Activated CD8-positive, alpha-beta T cell treated with anti-CD3 and anti-CD28 coated beads for 36 hours (primary cell): ENCODE measurements at regions of chr10 and their contacts with region 1.

Region 1: DNA sequence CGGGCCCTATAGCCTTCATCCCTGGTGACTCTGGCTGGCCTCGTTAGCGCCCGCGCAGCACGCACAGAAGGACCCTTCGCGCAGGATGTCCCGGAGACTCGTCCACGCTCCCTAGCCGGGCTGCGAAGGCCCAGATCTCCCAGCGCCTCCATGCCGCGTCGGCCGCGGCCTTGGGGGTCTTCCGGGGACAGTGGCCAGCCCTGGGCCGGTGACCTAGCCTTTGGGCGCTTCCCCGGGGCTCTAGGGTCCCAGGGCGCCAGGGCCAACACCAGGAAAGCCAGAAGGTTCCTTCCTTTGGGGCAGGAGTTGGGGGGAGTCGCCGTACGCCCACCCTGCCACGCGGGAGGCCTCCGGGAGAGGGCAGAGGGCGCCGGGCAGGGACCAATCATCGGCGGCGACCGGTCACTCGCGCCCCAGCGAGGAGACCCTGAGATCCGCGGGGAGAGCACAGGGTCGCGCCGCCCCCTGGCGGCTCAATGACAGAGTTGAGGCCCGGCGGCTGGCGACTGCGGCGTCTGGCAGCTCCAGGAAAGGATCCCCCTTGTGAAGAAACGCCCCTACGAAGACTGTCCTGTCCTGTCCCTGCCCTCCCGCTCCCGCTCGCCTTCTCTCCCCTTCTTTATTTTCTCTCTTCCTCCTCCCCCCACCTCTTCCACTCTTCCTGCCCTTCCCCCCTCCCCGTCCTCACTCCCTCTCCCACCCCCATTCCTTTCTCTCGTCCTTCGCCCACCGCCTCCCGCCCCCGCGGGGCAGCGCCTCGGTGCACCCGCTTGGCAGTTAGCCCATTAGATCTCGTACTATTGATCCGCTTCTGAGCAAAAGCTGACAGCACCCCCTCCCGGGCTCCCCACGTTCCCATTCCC is 62.3 kb upstream of the LBX1 start:
- DNase-seq: peak; percentile 75
- ATAC-seq: peak; percentile 84
- H3K4me3 Mint-ChIP-seq: peak overlapping the region; percentile 70
- H3K27ac Mint-ChIP-seq: no peak overlapping the region
- H3K4me1 Mint-ChIP-seq: peaks cover 8% of the 10 kb centered on the region
- H3K27me3 Mint-ChIP-seq: peaks cover 65% of the 10 kb centered on the region
- CTCF ChIP-seq: peak; percentile 88

Region 2: DNA sequence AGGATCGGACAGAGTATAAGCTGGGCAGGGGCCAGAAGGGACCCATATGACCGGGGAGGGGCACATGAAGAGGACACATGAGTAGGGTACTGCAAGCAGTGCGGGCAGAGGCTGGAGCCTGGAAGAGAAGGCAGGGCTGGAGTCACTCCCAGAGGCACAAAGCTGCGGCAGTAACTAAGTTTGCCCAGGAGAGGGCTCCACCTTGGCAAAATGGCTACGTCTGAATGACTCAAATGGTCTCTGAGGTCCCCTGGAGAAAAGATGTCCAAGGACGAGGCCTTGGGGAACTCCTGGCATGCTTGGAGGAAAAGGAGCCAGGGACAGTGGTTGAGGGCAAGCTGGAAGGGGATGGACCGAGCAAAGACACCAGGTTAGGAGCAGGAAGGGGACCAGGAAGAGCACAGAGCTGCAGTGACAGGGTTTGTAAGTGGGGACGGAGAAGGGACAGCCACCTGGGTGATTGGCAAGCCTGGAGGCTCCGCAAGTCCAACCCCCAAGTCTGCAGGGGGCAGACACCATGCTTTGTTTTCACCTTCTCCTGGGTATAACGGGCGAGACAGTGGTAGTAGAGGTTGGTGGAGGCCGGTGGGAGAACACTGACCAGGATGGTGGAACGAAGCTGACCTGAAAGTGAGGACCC is 19.2 kb before region 1 on chr10:
- CTCF ChIA-PET with region 1: interaction called, 40 read pairs
- POLR2A ChIA-PET with region 1: no interaction called
- intact Hi-C with region 1: no loop called
- DNase-seq: peak; percentile 73
- ATAC-seq: peak; percentile 93
- H3K4me3 Mint-ChIP-seq: no peak overlapping the region
- H3K27ac Mint-ChIP-seq: no peak overlapping the region
- H3K4me1 Mint-ChIP-seq: peaks cover 2% of the 10 kb centered on the region
- H3K27me3 Mint-ChIP-seq: peaks cover 20% of the 10 kb centered on the region
- CTCF ChIP-seq: peak; percentile 80